Mammary epithelial cell (primary cell): ENCODE measurements at regions of chr19 and their contacts with region 1.

Region 1: GRCh38 chr19:6516659-6517291 is 14.1 kb upstream of the TNFSF9 start:
- DNase-seq: peak; percentile 78
- H3K4me3 ChIP-seq: peak overlapping the region; percentile 52 to 83 (median 67)
- H3K27ac ChIP-seq: peak overlapping the region; percentile 43
- H3K4me1 ChIP-seq: peaks cover 13% of the 10 kb centered on the region
- H3K27me3 ChIP-seq: no peaks in the 10 kb centered on the region
- CTCF ChIP-seq: peak; percentile 87 to 98

Region 2: DNA sequence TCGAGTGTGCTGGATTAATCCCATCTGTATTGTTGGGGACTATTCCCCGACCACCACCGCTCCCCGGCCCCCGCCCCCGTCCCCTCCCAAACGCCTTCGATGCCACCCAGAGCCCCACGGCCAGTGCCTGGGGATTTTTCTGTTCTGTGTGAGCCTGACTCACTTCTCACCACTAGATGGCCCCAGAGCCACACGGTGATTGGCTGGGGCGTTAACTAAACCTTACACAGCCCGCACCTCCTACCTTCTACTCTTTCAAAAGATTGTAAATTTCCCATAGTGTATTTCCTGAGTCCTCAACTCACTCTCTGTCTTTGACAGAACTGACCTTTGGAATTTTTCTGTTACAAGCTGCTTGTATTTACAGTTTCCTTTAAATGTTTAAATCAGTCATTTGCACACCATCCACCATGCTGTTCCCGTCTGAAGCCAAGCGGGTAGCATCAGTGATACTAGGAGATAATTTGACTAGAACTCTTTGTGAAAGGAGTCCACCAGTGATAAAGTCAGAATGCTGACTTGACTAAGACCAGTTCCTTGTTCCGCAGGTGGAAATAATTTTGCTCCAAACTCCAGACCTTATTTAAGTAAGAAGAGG is 467.9 kb before region 1 on chr19:
- CTCF ChIA-PET with region 1: no interaction called
- dilution Hi-C with region 1: no loop called
- in situ Hi-C with region 1: no loop called
- intact Hi-C with region 1: loop called (anchors 10 kb)
- DNase-seq: peak; percentile 65
- H3K4me3 ChIP-seq: no peak overlapping the region
- H3K27ac ChIP-seq: no peak overlapping the region
- H3K4me1 ChIP-seq: no peaks in the 10 kb centered on the region
- H3K27me3 ChIP-seq: no peaks in the 10 kb centered on the region
- CTCF ChIP-seq: peak; percentile 87 to 91

Region 3: DNA sequence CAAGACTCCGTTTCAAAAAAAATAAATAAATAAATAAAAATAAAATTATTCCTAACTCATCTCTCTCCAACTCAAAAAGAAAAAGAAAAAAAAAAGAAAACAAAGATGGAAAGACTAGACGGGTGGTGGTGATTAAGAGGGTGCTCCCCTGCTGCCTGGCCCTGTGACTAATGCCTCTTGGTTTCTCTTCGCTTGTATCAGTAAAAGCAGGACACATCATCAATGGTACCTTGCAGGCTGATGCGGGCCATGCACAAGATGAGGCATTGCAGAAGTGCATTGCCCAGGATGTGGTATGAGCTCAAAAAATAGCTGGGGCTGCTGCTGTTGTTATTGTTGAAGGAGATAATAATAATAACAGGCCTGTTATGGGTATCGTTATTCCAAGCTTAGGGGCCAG is 198.0 kb before region 1 on chr19:
- CTCF ChIA-PET with region 1: no interaction called
- dilution Hi-C with region 1: no loop called
- in situ Hi-C with region 1: no loop called
- intact Hi-C with region 1: no loop called
- DNase-seq: peak; percentile 37
- H3K4me3 ChIP-seq: no peak overlapping the region
- H3K27ac ChIP-seq: no peak overlapping the region
- H3K4me1 ChIP-seq: no peaks in the 10 kb centered on the region
- H3K27me3 ChIP-seq: no peaks in the 10 kb centered on the region
- CTCF ChIP-seq: no peak

Region 4: DNA sequence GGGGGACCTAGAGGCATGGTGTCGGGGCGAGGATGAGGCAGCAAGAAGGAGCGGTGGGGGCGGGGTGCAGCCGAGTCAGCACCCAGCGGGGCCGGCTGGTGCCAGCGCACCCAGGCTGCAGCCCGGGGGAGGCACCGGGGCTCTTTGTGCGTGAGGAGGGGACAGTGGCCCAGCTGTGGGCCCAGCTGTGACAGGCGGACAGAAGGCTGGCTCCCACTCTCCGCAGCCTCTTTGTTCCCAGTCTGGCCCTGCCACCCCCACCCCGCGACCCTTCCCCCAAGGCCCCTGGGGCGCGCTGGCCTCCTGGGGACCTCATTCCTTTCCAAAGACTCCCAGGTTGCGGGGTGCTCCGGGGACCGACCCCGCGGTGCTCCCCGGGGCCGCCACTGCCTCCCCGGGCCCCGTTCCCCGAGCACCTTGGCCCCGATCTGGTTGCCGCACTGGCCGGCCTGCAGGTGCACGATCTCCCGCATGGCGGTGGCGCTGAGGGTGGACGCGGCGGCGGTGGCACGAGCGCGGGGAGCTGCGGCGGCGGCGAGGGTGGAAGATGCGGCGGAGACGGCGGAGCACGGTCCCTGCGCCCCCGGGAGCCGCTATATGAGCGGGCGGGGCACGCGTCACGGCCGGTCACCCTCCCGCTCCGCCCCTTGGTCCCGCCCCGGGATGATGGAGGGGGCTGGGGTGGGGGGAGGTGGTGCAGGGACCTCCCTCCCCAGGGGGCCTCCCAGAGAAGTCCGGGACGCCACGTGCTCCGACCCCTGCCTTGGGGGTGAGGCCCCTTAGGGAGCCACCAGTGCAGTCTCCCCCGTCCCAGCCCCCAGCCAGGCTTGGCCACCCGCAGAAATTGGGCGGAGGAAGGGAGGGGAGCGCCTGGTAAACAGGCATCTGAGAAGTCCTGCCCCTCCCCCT is 14.8 kb before region 1 on chr19 and contains the start of gene TUBB4A:
- CTCF ChIA-PET with region 1: no interaction called
- dilution Hi-C with region 1: no loop called
- in situ Hi-C with region 1: no loop called
- intact Hi-C with region 1: no loop called
- DNase-seq: no peak
- H3K4me3 ChIP-seq: peak within 1 kb of the TSS in 1 of 3 experiments; percentile 26
- H3K27ac ChIP-seq: no peak within 1 kb of the TSS
- H3K4me1 ChIP-seq: peaks cover 5% of the 10 kb centered on the region
- H3K27me3 ChIP-seq: peaks cover 9% of the 10 kb centered on the region
- CTCF ChIP-seq: no peak
- total RNA-seq, gene TUBB4A: not detected

Region 5: GRCh38 chr19:6564393-6564792 is 47.6 kb after region 1 on chr19:
- CTCF ChIA-PET with region 1: no interaction called
- dilution Hi-C with region 1: no loop called
- in situ Hi-C with region 1: no loop called
- intact Hi-C with region 1: loop called (anchors 1 kb)
- DNase-seq: peak; percentile 47
- H3K4me3 ChIP-seq: no peak overlapping the region
- H3K27ac ChIP-seq: no peak overlapping the region
- H3K4me1 ChIP-seq: no peaks in the 10 kb centered on the region
- H3K27me3 ChIP-seq: no peaks in the 10 kb centered on the region
- CTCF ChIP-seq: no peak

Region 6: GRCh38 chr19:6718741-6719539 is 202.2 kb after region 1 on chr19:
- CTCF ChIA-PET with region 1: no interaction called
- dilution Hi-C with region 1: no loop called
- in situ Hi-C with region 1: no loop called
- intact Hi-C with region 1: loop called (anchors 5 kb)
- DNase-seq: peak; percentile 23
- H3K4me3 ChIP-seq: peak overlapping the region in 1 of 3 experiments; percentile 31
- H3K27ac ChIP-seq: no peak overlapping the region
- H3K4me1 ChIP-seq: peaks cover 35% of the 10 kb centered on the region
- H3K27me3 ChIP-seq: no peaks in the 10 kb centered on the region
- CTCF ChIP-seq: no peak

Region 7: GRCh38 chr19:6767357-6768235 is 250.8 kb after region 1 on chr19 and contains the start of gene SH2D3A:
- CTCF ChIA-PET with region 1: no interaction called
- dilution Hi-C with region 1: no loop called
- in situ Hi-C with region 1: no loop called
- intact Hi-C with region 1: loop called (anchors 1 kb)
- DNase-seq: peak; percentile 96
- H3K4me3 ChIP-seq: peak within 1 kb of the TSS; percentile 75 to 86 (median 81)
- H3K27ac ChIP-seq: peak within 1 kb of the TSS; percentile 94
- H3K4me1 ChIP-seq: peaks cover 16% of the 10 kb centered on the region
- H3K27me3 ChIP-seq: no peaks in the 10 kb centered on the region
- CTCF ChIP-seq: no peak
- total RNA-seq, gene SH2D3A: 59.0 to 95.1 TPM